H1 (cell line): ENCODE measurements at regions of chr7 and their contacts with region 1.

Region 1: GRCh38 chr7:31633894-31634494 is 53.0 kb upstream of the PPP1R17 start:
- DNase-seq: peak in 1 of 2 experiments; percentile 60
- H3K4me3 ChIP-seq: no peak overlapping the region
- H3K27ac ChIP-seq: no peak overlapping the region
- H3K4me1 ChIP-seq: peaks cover 0 to 3% (median 1%) of the 10 kb centered on the region in 4 experiments; a peak in 2 of 7 replicates
- H3K27me3 ChIP-seq: no peaks in the 10 kb centered on the region
- CTCF ChIP-seq: peak; percentile 52 to 92 (median 83)
- EP300 ChIP-seq: no peak
- POLR2A ChIP-seq: no peak
- RAD21 ChIP-seq: peak; percentile 99

Region 2: DNA sequence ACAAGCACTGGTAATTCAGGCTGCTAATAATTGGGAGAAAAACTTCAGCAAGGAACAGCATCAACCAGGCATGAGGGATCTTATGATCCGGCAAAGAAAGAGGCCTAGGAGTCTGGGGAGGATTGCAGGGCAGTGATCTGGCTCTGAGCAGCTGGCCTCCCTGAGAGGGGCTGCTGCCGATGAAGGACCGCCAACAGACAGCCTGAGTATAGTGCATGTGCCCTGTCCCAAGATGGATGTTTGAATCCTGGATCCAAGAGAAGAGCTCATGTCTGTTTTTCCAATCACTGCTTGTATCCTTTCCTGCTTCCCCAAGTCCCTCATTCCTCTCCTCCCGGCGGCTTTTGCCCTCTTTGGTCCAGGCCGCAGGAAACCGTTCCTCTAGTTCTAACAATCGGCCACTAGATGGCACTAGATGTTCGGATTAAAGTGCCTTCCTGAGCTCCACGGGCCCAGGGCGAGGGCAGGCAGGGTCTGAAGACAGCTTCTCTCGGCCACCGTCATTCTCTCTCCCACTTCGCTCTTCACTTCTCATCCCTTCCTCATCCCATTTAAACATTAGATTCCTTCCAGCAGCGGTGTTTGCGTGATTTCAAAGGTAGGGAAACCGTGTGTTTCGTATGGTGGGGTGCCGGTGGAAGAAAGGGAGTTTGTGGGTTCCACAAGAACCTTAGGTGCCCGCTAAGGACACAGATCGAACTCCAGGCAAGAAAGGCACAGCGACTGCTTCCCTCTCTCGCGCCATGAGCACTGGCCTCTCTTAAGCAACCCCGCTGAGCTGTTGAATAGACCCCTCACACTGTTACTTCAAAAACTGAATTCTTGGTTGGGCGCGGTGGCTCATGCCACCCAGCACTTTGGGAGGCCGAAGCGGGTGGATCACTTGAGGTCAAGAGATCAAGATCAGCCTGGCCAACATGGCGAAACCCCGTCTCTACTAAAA is 499.5 kb before region 1 on chr7:
- CTCF ChIA-PET with region 1: interaction called, 38 read pairs
- POLR2A ChIA-PET with region 1: no interaction called
- DNase-seq: peak; percentile 56 to 84
- H3K4me3 ChIP-seq: peak overlapping the region in 1 of 4 experiments; percentile 26; a peak in 1 of 8 replicates
- H3K27ac ChIP-seq: no peak overlapping the region
- H3K4me1 ChIP-seq: no peaks in the 10 kb centered on the region; a peak in 1 of 7 replicates
- H3K27me3 ChIP-seq: no peaks in the 10 kb centered on the region
- CTCF ChIP-seq: peak; percentile 50 to 83 (median 82)
- EP300 ChIP-seq: no peak
- POLR2A ChIP-seq: no peak
- RAD21 ChIP-seq: peak; percentile 87 to 93

Region 3: DNA sequence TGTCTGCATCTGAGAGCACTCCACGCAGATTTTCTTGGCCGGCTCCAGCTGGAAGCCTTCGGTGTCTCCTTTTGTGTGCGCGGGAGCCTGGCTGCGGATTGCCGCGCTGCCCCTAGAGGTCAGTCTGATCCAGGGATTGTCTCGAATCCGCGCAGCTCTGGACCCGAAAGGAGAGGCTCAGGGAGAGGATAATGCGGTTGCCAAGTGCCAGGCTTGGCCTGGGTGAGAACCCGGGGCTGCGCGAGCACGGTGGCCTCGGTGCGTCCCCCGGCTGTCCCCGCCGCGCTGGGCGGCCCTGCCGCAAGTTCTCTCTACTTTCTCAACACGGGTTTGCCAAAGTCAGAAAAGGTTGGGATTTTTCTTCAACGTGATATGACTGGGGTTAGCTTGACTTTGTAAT is 441.0 kb before region 1 on chr7:
- CTCF ChIA-PET with region 1: interaction called, 36 read pairs
- POLR2A ChIA-PET with region 1: interaction called, 3 read pairs
- DNase-seq: peak; percentile 76 to 84
- H3K4me3 ChIP-seq: no peak overlapping the region
- H3K27ac ChIP-seq: no peak overlapping the region
- H3K4me1 ChIP-seq: no peaks in the 10 kb centered on the region
- H3K27me3 ChIP-seq: no peaks in the 10 kb centered on the region; a peak in 1 of 7 replicates
- CTCF ChIP-seq: peak; percentile 90 to 95 (median 90)
- EP300 ChIP-seq: no peak
- POLR2A ChIP-seq: no peak
- RAD21 ChIP-seq: peak; percentile 96 to 98

Region 4: GRCh38 chr7:31336202-31337001 is 297.6 kb before region 1 on chr7:
- CTCF ChIA-PET with region 1: interaction called, 19 read pairs
- POLR2A ChIA-PET with region 1: no interaction called
- DNase-seq: peak in 1 of 2 experiments; percentile 87
- H3K4me3 ChIP-seq: peak overlapping the region; percentile 37 to 63 (median 53)
- H3K27ac ChIP-seq: no peak overlapping the region
- H3K4me1 ChIP-seq: no peaks in the 10 kb centered on the region
- H3K27me3 ChIP-seq: peaks cover 7 to 30% (median 18%) of the 10 kb centered on the region in 4 experiments; a peak in 6 of 7 replicates
- CTCF ChIP-seq: peak; percentile 71 to 82 (median 80)
- EP300 ChIP-seq: no peak
- POLR2A ChIP-seq: no peak
- RAD21 ChIP-seq: peak; percentile 41 to 69

Region 5: DNA sequence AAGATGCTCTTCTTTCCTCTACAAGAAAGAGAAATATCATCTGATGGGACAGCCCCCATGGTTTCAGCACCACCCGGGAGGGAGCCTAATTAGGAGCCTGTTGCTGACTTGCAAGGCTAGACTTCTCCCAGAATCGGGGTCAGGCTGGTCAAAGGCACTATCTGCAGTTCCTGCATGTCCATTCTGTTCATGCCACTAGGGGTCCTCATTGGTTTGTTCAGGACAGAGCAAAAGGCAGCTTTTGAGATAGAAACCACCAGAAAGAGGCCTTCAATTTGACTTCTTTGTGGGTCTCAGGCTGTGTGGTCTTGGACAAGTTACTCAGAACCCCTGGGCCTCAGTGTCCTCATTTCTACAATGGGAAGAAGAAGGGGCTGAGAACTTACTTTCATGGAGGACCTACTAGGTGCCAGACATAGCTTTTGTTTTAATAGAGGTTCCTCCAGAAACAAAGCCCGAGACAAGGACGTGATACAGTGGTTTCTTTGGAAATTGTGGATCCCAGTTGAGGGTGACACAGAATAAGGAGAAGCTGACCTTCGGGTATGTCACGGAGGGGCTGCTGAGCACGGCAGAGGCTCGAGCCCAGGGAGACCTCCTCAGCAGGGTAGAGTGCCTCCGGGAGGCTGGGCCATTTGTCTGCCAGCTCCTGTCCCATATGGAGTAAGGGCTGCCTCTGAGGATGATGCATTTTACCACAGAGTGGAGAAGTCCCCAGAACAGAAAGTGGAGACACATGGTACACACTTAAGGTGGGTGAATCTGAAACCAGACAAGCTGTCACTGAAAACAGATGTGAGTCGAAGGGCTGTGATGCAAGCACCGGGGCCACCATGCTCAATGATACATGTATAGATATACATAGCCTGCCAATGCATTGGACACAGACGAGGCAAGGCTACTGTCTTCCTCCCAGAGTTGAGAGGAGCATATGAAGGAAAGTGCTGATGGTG is 260.4 kb before region 1 on chr7:
- CTCF ChIA-PET with region 1: interaction called, 136 read pairs
- POLR2A ChIA-PET with region 1: interaction called, 3 read pairs
- DNase-seq: peak; percentile 56 to 76
- H3K4me3 ChIP-seq: no peak overlapping the region
- H3K27ac ChIP-seq: no peak overlapping the region
- H3K4me1 ChIP-seq: peaks cover 0 to 3% (median 0%) of the 10 kb centered on the region in 4 experiments; a peak in 2 of 7 replicates
- H3K27me3 ChIP-seq: peaks cover 0 to 9% (median 2%) of the 10 kb centered on the region in 4 experiments; a peak in 4 of 7 replicates
- CTCF ChIP-seq: peak; percentile 56 to 88 (median 85)
- EP300 ChIP-seq: no peak
- POLR2A ChIP-seq: no peak
- RAD21 ChIP-seq: peak; percentile 90 to 95

Region 6: GRCh38 chr7:31488562-31489203 is 145.3 kb before region 1 on chr7:
- CTCF ChIA-PET with region 1: interaction called, 24 read pairs
- POLR2A ChIA-PET with region 1: no interaction called
- DNase-seq: peak; percentile 69 to 90
- H3K4me3 ChIP-seq: no peak overlapping the region
- H3K27ac ChIP-seq: no peak overlapping the region
- H3K4me1 ChIP-seq: peaks cover 0 to 5% (median 3%) of the 10 kb centered on the region in 4 experiments; a peak in 3 of 7 replicates
- H3K27me3 ChIP-seq: no peaks in the 10 kb centered on the region
- CTCF ChIP-seq: peak; percentile 84 to 92 (median 90)
- EP300 ChIP-seq: no peak
- POLR2A ChIP-seq: no peak
- RAD21 ChIP-seq: peak; percentile 91 to 96

Region 7: GRCh38 chr7:31583942-31584341 is 50.1 kb before region 1 on chr7:
- CTCF ChIA-PET with region 1: interaction called, 14 read pairs
- POLR2A ChIA-PET with region 1: no interaction called
- DNase-seq: no peak
- H3K4me3 ChIP-seq: no peak overlapping the region
- H3K27ac ChIP-seq: no peak overlapping the region
- H3K4me1 ChIP-seq: peaks cover 0 to 3% (median 2%) of the 10 kb centered on the region in 4 experiments; a peak in 2 of 7 replicates
- H3K27me3 ChIP-seq: no peaks in the 10 kb centered on the region
- CTCF ChIP-seq: no peak
- EP300 ChIP-seq: no peak
- POLR2A ChIP-seq: no peak
- RAD21 ChIP-seq: no peak

Region 8: DNA sequence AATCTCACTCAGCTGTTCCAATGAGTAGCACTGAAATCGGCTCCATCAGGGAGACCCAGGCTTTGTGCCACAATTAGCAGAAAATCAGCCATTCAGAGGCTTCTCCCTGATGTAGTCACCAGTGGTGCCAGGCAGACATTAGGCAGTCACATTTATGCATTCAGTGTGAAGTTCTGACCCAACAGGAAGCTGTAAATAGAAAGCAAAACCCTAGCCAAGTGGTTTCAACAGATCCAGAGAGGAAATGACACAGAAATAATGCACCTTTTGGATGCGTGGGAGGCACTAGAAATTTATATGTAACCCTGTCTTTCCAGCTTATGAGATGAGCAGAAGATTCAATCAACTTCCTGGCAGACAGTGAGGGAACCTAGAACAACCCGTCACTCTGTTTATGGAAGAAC is 249.8 kb after region 1 on chr7:
- CTCF ChIA-PET with region 1: no interaction called
- POLR2A ChIA-PET with region 1: no interaction called
- DNase-seq: no peak
- H3K4me3 ChIP-seq: no peak overlapping the region
- H3K27ac ChIP-seq: no peak overlapping the region
- H3K4me1 ChIP-seq: no peaks in the 10 kb centered on the region; a peak in 1 of 7 replicates
- H3K27me3 ChIP-seq: no peaks in the 10 kb centered on the region
- CTCF ChIP-seq: no peak
- EP300 ChIP-seq: no peak
- POLR2A ChIP-seq: no peak
- RAD21 ChIP-seq: no peak